ENCODE measurements at regions of chr2 and their contacts with region 1.

Region 1: DNA sequence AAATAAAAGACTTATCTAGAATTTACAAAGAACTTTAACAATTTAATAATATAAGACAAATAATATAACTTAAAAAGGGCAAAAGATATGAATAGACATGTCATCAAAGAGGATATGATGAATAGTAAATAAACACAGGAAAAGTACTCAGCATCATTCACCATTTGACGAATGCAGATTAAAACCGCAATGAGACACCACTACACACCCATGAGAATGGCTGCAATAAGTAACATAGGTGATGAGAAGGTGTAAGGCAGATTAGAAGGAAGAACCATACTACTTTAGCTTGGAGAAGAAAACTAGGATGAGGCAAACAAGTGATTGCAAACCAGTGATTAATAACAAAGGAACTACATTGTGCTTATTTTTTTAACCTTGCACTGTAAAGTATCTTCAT is 152.0 kb downstream of the CYRIA start:
- DNase-seq: no peak
- H3K4me3 ChIP-seq: no peak overlapping the region
- H3K27ac ChIP-seq: no peak overlapping the region
- H3K4me1 ChIP-seq: no peaks in the 10 kb centered on the region
- H3K27me3 ChIP-seq: peaks cover 14 to 24% of the 10 kb centered on the region in 2 experiments
- CTCF ChIP-seq: no peak
- POLR2A ChIP-seq: no peak

Region 2: DNA sequence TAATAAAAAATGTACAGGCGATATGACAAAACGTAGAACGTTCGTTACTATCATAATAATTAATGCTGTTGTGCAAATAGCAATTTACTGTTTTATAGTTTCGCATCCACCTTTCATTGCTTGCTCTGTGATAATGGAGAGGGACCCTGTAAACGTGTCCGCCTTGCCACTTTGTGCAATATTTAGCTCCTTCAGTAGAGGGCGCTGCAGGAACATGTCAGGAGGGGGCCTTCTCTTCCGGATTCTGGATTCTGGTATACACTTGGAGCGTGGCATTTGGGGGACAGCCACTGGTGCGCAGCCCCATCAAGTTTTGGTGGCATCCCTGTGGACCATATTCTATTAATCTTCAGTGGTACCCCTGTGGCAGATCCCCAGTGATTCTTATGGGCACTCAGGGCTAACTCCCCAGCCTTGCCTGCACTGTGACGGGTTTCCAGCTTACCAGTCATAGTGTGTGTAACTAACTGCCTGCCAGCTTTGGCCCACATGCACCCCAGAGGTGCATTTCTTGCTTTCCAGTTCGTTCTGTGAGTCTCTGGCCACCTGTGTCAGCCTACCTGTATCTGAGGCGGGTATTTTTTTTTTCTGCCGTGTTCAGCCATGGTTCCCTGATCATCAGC is 11.8 kb after region 1 on chr2:
- CTCF ChIA-PET with region 1: interaction called, 13 read pairs
- POLR2A ChIA-PET with region 1: no interaction called
- dilution Hi-C with region 1: no loop called
- intact Hi-C with region 1: no loop called
- DNase-seq: peak; percentile 25
- H3K4me3 ChIP-seq: no peak overlapping the region
- H3K27ac ChIP-seq: no peak overlapping the region
- H3K4me1 ChIP-seq: no peaks in the 10 kb centered on the region
- H3K27me3 ChIP-seq: peaks cover 2 to 9% of the 10 kb centered on the region in 2 experiments
- CTCF ChIP-seq: peak; percentile 61 to 62
- POLR2A ChIP-seq: no peak

Measured in endothelial cell of umbilical vein (primary cell).